ENCODE measurements at regions of chr3 and their contacts with region 1.

Region 1: DNA sequence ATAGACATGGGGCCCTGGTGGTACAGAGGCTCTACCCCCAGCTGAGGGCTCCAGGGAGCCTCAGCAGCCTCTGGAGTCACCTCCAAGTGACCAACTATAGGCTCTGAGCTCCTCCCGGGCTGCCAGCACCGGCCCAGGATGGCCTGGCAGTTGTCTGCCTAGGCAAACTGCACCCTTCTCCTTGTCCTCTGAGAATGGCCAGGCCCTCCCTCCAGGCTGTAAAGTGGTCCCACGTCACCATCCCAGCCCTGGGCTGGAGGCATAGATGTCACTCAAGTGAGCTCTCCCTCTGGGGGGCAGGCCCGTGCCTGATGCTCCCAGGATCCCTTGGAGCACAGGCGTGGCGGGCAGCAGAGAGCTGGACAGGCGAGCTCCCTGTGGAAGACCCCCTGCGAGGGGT is 120.1 kb downstream of the SEC22A start:
- DNase-seq: no peak
- H3K4me3 ChIP-seq: no peak overlapping the region
- H3K27ac ChIP-seq: no peak overlapping the region
- H3K4me1 ChIP-seq: no peaks in the 10 kb centered on the region
- H3K27me3 ChIP-seq: peaks cover 2 to 5% of the 10 kb centered on the region in 2 experiments
- CTCF ChIP-seq: no peak
- POLR2A ChIP-seq: no peak

Region 2: GRCh38 chr3:122456074-122456473 is 865.7 kb before region 1 on chr3:
- CTCF ChIA-PET with region 1: no interaction called
- POLR2A ChIA-PET with region 1: no interaction called
- dilution Hi-C with region 1: no loop called
- intact Hi-C with region 1: no loop called
- DNase-seq: no peak
- H3K4me3 ChIP-seq: no peak overlapping the region
- H3K27ac ChIP-seq: no peak overlapping the region
- H3K4me1 ChIP-seq: no peaks in the 10 kb centered on the region
- H3K27me3 ChIP-seq: no peaks in the 10 kb centered on the region
- CTCF ChIP-seq: no peak
- POLR2A ChIP-seq: no peak

Region 3: DNA sequence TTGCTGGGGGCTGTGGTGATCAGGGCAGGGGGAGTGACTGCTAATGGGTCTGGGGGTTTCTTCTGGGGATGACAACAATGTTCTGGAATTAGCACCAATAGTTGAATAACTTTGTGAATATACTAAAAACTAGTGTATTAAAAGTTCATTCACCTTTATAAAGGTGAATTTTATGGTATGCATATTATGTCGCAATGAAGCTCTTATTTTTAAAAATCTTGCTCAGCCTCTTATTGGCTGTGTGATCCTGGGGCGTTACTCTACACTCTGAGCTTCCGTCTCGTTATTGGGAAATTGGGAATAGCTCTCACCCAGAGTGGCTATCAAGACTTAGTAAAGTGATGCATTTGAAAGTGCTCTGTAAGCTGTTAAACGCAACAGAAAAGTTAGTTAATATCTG is 14.7 kb before region 1 on chr3:
- CTCF ChIA-PET with region 1: interaction called, 10 read pairs
- POLR2A ChIA-PET with region 1: no interaction called
- dilution Hi-C with region 1: no loop called
- intact Hi-C with region 1: no loop called
- DNase-seq: no peak
- H3K4me3 ChIP-seq: no peak overlapping the region
- H3K27ac ChIP-seq: no peak overlapping the region
- H3K4me1 ChIP-seq: no peaks in the 10 kb centered on the region
- H3K27me3 ChIP-seq: no peaks in the 10 kb centered on the region
- CTCF ChIP-seq: no peak
- POLR2A ChIP-seq: no peak

Region 4: GRCh38 chr3:123980539-123980938 is 658.7 kb after region 1 on chr3:
- CTCF ChIA-PET with region 1: no interaction called
- POLR2A ChIA-PET with region 1: no interaction called
- dilution Hi-C with region 1: no loop called
- intact Hi-C with region 1: no loop called
- DNase-seq: no peak
- H3K4me3 ChIP-seq: no peak overlapping the region
- H3K27ac ChIP-seq: no peak overlapping the region
- H3K4me1 ChIP-seq: no peaks in the 10 kb centered on the region
- H3K27me3 ChIP-seq: peaks cover 38 to 58% of the 10 kb centered on the region in 2 experiments
- CTCF ChIP-seq: no peak
- POLR2A ChIP-seq: no peak